Breast epithelium (tissue), 4 donors: ENCODE measurements at regions of chr7 and their contacts with region 1.

Region 1: GRCh38 chr7:74479961-74480829 is 26.5 kb downstream of the GTF2IRD1 start:
- DNase-seq: peak in 1 of 2 donors; percentile 65
- H3K4me3 ChIP-seq: peak overlapping the region; percentile 45 to 66 (median 45)
- H3K27ac ChIP-seq: peak overlapping the region; percentile 95
- H3K4me1 ChIP-seq: peaks cover 25 to 34% of the 10 kb centered on the region in 2 donors
- H3K27me3 ChIP-seq: no peaks in the 10 kb centered on the region
- CTCF ChIP-seq: no peak
- POLR2A ChIP-seq: no peak

Region 2: GRCh38 chr7:74449809-74450397 is 30.3 kb before region 1 on chr7:
- intact Hi-C with region 1: no loop called
- DNase-seq: no peak
- H3K4me3 ChIP-seq: no peak overlapping the region
- H3K27ac ChIP-seq: no peak overlapping the region
- H3K4me1 ChIP-seq: no peaks in the 10 kb centered on the region
- H3K27me3 ChIP-seq: no peaks in the 10 kb centered on the region
- CTCF ChIP-seq: peak; percentile 55 to 82 (median 80)
- POLR2A ChIP-seq: no peak

Region 3: DNA sequence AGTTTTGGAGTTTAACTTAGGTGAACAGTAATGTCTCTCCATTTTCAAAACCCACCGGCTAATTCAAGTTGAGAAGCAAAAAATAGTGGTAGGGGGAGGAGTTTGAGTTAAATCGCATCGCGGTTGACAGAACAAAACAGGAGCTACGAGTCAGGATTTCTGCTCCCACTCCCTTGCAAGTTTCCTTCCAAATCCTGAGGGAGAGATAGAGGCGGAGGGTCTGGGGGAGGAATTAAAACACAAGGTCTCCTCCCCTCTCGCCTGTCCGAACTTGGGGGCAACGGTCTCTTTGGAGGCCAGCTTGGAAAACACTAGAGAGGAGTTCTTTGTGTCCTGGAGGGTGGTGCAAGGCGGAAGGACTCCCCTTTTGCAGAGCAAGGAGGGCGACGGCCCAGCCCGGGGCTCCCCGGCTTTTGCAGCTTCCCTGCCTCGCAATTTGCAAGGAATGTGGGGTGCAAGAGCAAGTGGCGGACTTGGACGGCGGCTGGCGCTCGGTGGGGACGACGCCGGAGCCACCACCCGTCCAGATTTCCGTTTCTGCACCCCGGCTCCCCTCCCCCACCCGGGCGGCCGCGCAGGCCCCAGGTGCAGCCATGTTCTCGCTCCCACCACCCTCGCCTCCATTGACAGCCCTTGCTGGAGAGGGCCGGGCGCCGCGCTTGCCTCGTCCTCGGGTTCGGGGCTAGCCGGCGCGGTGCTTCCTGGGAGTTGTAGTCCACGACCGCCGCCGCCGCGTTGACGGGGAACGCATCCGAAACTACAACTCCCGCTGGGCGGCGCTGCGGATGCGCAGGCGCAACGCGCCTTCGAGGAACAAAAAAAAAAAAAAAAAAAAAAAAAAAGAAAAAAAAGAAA is 176.9 kb after region 1 on chr7:
- intact Hi-C with region 1: loop called (anchors 5 kb)
- DNase-seq: peak; percentile 95 to 98
- H3K4me3 ChIP-seq: peak overlapping the region; percentile 95 to 100 (median 99)
- H3K27ac ChIP-seq: peak overlapping the region; percentile 98
- H3K4me1 ChIP-seq: peaks cover 0 to 14% of the 10 kb centered on the region in 2 donors
- H3K27me3 ChIP-seq: no peaks in the 10 kb centered on the region
- CTCF ChIP-seq: no peak
- POLR2A ChIP-seq: no peak